Sciatic nerve (tissue), 2 donors: ENCODE measurements at regions of chr13 and their contacts with region 1.

Region 1: GRCh38 chr13:95106562-95106961 is 194.7 kb downstream of the ABCC4 start:
- DNase-seq: no peak
- ATAC-seq: no peak

Region 2: GRCh38 chr13:94928127-94928775 is 178.3 kb before region 1 on chr13:
- intact Hi-C with region 1: no loop called
- DNase-seq: no peak
- ATAC-seq: peak; percentile 71

Region 3: GRCh38 chr13:95083758-95084157 is 22.8 kb before region 1 on chr13:
- intact Hi-C with region 1: loop called (anchors 1 kb)
- DNase-seq: no peak
- ATAC-seq: no peak